Natural killer cell (primary cell): ENCODE measurements at regions of chr9 and their contacts with region 1.

Region 1: DNA sequence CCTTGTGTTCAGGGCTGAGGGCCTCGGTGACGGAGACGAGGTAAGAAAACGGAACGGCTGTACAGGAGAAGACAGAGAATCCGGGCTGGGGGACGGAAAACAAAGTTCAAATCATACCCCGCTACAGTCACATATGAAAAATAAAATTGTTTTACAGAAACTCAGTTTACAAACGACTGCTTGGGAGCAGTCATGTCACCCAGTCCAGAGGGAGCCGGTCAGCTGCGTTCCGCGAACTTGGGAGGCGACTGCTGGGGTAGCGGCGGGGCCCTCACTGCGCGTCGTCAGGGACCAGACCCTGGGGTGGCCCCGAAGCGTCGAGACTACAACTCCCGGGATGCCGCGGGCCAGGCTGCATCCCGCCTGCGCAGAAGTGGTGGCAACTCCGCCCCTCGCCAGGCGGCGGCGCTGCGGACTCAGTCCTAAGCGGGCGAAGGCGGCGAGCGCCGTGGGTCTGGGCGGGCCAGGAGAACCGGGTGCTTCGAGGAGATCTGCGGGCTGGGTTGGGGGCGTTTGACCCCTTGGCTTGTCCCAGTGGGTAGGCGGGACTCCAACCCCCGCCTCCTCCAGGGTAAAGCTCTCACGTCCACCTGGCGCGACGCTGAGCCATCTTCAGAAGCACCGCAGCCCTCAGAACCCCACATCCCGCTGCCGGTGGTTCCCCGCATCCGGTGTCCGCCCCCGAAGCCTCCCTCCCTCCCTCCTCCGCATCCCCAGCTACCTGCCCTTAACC is 4.0 kb downstream of the SIT1 start:
- DNase-seq: peak; percentile 94 to 95
- ATAC-seq: peak; percentile 97 to 99 (median 97)
- H3K4me3 ChIP-seq: peak overlapping the region; percentile 55
- H3K4me3 Mint-ChIP-seq: peak overlapping the region; percentile 99
- H3K27ac ChIP-seq: peak overlapping the region; percentile 82
- H3K27ac Mint-ChIP-seq: peak overlapping the region; percentile 98
- H3K4me1 ChIP-seq: peaks cover 79% of the 10 kb centered on the region
- H3K4me1 Mint-ChIP-seq: peaks cover 42 to 58% of the 10 kb centered on the region in 2 donors
- H3K27me3 ChIP-seq: no peaks in the 10 kb centered on the region
- H3K27me3 Mint-ChIP-seq: no peaks in the 10 kb centered on the region
- CTCF ChIP-seq: peak; percentile 94

Region 2: DNA sequence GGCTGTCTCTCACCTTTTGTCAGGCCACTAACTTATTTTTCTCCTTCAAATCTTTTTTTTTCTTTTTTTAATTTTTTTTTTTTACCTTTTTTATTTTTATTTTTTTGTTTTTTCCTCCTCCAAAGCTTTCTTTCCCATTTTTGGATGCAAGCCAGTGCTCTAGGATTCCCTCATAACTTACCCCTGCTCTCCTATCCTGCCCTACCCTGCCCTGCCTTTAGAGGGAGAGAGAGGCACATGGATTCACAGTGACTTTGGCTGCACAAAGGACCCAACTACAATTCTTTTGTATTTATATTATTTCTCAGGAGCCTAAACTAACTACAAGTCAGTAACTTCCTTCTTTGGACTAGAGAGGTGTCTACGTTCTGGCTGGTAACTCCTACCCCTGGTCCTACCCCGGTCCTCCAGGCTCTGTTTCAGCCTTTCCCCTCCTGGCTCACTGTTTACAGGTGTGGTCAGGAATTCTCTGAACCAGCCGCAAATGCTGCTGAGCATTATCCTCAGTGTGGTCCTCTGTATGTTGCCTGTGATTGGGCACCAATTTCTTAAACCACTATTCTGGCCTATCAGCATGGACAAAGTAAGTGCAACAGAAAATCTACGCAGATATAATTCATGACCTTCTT is 165.2 kb before region 1 on chr9:
- intact Hi-C with region 1: no loop called
- DNase-seq: peak in 1 of 2 donors; percentile 34
- ATAC-seq: peak in 1 of 3 donors; percentile 55
- H3K4me3 ChIP-seq: no peak overlapping the region
- H3K4me3 Mint-ChIP-seq: no peak overlapping the region
- H3K27ac ChIP-seq: no peak overlapping the region
- H3K27ac Mint-ChIP-seq: no peak overlapping the region
- H3K4me1 ChIP-seq: no peaks in the 10 kb centered on the region
- H3K4me1 Mint-ChIP-seq: no peaks in the 10 kb centered on the region
- H3K27me3 ChIP-seq: peaks cover 7% of the 10 kb centered on the region
- H3K27me3 Mint-ChIP-seq: peaks cover 4 to 15% of the 10 kb centered on the region in 2 donors
- CTCF ChIP-seq: peak; percentile 12

Region 3: DNA sequence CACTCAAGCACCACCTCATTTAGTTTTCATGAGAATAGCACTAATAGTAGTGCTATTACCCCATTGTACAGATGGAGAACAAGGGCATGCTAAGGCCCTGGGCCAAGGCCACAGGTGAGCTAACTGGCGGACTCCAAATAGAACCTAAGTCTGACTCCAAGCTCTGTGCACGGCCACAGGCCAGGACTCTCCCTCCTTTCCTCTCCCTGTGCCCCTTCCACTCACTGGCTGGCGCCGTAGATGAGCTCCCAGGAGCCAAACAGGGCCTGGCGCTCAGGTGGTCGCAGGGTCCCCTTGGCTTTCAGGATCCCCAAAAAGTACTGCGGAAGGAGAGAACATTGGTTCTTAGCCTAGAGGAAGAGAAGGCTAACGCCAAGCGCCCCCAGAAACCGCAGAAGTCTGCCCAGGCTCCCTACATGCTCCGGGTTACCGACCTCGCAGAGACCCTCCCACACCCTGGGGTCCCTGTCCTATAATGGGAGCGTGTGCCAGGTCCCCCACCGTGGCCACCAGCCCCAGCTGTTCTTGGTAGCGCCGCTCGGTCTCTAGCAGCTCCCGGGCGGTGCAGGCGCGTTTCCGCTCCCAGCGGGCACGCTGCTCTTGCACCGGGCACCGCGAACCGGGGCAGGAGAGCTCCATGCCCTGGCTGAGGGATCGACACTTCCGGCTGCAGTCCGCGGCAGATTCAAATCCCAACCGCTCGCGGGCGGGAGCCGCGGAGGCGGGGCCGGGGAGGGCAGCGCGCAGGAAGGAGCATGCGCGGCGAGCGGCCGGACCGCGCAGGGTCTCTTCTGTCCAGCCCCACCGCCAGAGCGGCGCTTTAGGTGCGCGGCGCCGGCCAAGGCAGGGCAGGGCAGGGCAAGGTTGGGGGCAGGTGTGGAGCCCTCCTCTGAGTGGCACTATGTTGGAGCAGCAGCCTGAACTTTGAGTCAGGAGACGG is 18.1 kb after region 1 on chr9 and contains the start of gene ARHGEF39:
- intact Hi-C with region 1: no loop called
- DNase-seq: peak; percentile 62 to 81
- ATAC-seq: peak; percentile 64 to 79 (median 69)
- H3K4me3 ChIP-seq: peak within 1 kb of the TSS; percentile 58
- H3K4me3 Mint-ChIP-seq: peak within 1 kb of the TSS; percentile 91
- H3K27ac ChIP-seq: peak within 1 kb of the TSS; percentile 64
- H3K27ac Mint-ChIP-seq: peak within 1 kb of the TSS; percentile 94 to 95
- H3K4me1 ChIP-seq: peaks cover 57% of the 10 kb centered on the region
- H3K4me1 Mint-ChIP-seq: peaks cover 43 to 57% of the 10 kb centered on the region in 2 donors
- H3K27me3 ChIP-seq: no peaks in the 10 kb centered on the region
- H3K27me3 Mint-ChIP-seq: no peaks in the 10 kb centered on the region
- CTCF ChIP-seq: no peak
- total RNA-seq, gene ARHGEF39: 1.3 to 3.2 (median 1.5) TPM

Region 4: GRCh38 chr9:35814841-35815543 is 168.3 kb after region 1 on chr9 and contains the start of gene HINT2:
- intact Hi-C with region 1: loop called (anchors 1 kb)
- DNase-seq: peak; percentile 96 to 98
- ATAC-seq: peak; percentile 78 to 91 (median 79)
- H3K4me3 ChIP-seq: peak within 1 kb of the TSS; percentile 73
- H3K4me3 Mint-ChIP-seq: peak within 1 kb of the TSS; percentile 98
- H3K27ac ChIP-seq: peak within 1 kb of the TSS; percentile 87
- H3K27ac Mint-ChIP-seq: peak within 1 kb of the TSS; percentile 96 to 98
- H3K4me1 ChIP-seq: peaks cover 38% of the 10 kb centered on the region
- H3K4me1 Mint-ChIP-seq: peaks cover 43 to 53% of the 10 kb centered on the region in 2 donors
- H3K27me3 ChIP-seq: no peaks in the 10 kb centered on the region
- H3K27me3 Mint-ChIP-seq: no peaks in the 10 kb centered on the region
- CTCF ChIP-seq: no peak
- total RNA-seq, gene HINT2: 25.8 to 27.5 (median 25.9) TPM

Region 5: GRCh38 chr9:35923927-35924763 is 277.4 kb after region 1 on chr9:
- intact Hi-C with region 1: no loop called
- DNase-seq: no peak
- ATAC-seq: no peak
- H3K4me3 ChIP-seq: no peak overlapping the region
- H3K4me3 Mint-ChIP-seq: no peak overlapping the region
- H3K27ac ChIP-seq: no peak overlapping the region
- H3K27ac Mint-ChIP-seq: no peak overlapping the region
- H3K4me1 ChIP-seq: no peaks in the 10 kb centered on the region
- H3K4me1 Mint-ChIP-seq: no peaks in the 10 kb centered on the region
- H3K27me3 ChIP-seq: no peaks in the 10 kb centered on the region
- H3K27me3 Mint-ChIP-seq: peaks cover 14 to 19% of the 10 kb centered on the region in 2 donors
- CTCF ChIP-seq: no peak